Panc1 (cell line): ENCODE measurements at regions of chr17 and their contacts with region 1.

Region 1: DNA sequence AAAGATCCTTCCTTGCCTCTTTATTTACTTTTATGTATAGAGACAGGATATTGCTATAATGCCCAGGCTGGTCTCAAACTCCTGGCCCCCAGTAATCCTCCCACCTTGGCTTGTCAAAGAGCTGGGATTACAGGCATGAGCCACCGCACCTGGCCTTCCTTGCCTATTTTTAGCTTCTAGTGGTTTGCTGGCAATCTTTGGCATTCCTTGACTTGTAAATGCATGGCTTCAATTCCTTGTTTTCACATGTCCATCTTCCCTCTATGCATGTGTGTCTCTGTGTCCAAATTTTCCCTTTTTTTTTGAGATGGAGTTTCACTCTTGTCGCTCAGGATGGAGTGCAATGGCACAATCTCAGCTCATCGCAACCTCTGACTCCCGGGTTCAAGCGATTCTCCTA is 22.5 kb downstream of the HEXIM2 start:
- DNase-seq: no peak
- ATAC-seq: no peak
- H3K4me3 ChIP-seq: no peak overlapping the region
- H3K27ac ChIP-seq: no peak overlapping the region
- H3K4me1 ChIP-seq: no peaks in the 10 kb centered on the region
- H3K27me3 ChIP-seq: no peaks in the 10 kb centered on the region
- CTCF ChIP-seq: no peak

Region 2: DNA sequence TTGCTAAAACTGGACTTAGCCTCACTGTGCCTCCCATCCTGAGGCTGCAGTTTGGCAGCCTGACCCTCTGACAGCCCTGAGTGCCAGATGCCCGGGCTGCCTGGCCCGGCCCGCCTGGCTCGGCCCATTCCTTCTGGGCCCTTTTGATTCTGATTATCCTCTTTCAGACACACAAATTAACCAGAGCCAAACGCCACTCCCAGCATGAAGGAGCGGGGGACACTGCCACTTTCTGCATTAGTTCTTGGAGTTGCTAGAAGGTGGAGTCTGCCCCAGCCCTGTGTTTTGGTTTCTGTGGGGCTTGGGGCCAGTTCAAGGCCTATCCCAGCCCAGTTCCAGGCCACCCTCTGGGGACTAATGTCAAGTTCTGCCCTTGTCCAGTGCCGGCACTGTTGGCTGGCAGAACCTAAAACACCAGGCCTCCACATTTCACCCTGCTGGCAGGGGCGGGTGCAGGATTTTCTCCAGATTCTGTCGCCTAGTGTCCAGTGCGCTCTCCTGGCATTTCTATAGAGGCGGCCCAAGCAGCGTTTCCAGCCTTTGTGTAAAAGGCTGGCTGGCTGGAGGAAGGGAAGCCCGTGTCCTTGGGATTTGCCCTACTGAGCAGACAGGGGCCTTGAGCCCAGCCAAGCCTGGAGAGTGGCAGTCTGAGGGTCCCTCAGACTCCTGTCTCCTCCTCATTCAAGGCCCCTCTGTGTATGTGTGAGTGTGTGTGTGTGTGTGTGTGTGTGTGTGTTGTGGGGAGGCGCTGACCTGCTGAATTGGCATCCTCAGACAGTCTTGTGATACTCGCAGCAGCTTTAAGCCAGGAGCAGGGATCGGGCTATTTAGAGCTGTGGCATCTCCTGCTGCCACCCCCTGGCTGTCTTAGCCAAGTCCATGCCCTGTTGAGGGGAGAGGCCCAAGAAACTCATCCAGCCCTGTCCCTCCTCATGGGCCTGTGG is 73.2 kb before region 1 on chr17:
- CTCF ChIA-PET with region 1: no interaction called
- POLR2A ChIA-PET with region 1: no interaction called
- in situ Hi-C with region 1: no loop called
- intact Hi-C with region 1: no loop called
- DNase-seq: no peak
- ATAC-seq: peak; percentile 46; the same call in 1 of the 2 replicates
- H3K4me3 ChIP-seq: no peak overlapping the region
- H3K27ac ChIP-seq: peak overlapping the region; percentile 39
- H3K4me1 ChIP-seq: peaks cover 13% of the 10 kb centered on the region
- H3K27me3 ChIP-seq: no peaks in the 10 kb centered on the region
- CTCF ChIP-seq: no peak

Region 3: GRCh38 chr17:45197555-45198334 is 13.6 kb after region 1 on chr17:
- CTCF ChIA-PET with region 1: interaction called, 3 read pairs
- POLR2A ChIA-PET with region 1: interaction called, 13 read pairs
- in situ Hi-C with region 1: no loop called
- intact Hi-C with region 1: no loop called
- DNase-seq: peak; percentile 61
- ATAC-seq: peak; percentile 100
- H3K4me3 ChIP-seq: peak overlapping the region in 1 of 2 experiments; percentile 32; a peak in 2 of 4 replicates
- H3K27ac ChIP-seq: peak overlapping the region; percentile 88
- H3K4me1 ChIP-seq: peaks cover 18% of the 10 kb centered on the region
- H3K27me3 ChIP-seq: no peaks in the 10 kb centered on the region
- CTCF ChIP-seq: peak; percentile 97